ENCODE measurements at regions of chr15 and their contacts with region 1.

Region 1: GRCh38 chr15:66472176-66472999 is 25.2 kb downstream of the SNAPC5 start:
- H3K4me3 ChIP-seq: no peak overlapping the region
- H3K27ac ChIP-seq: no peak overlapping the region
- H3K4me1 ChIP-seq: no peaks in the 10 kb centered on the region
- CTCF ChIP-seq: no peak

Region 2: DNA sequence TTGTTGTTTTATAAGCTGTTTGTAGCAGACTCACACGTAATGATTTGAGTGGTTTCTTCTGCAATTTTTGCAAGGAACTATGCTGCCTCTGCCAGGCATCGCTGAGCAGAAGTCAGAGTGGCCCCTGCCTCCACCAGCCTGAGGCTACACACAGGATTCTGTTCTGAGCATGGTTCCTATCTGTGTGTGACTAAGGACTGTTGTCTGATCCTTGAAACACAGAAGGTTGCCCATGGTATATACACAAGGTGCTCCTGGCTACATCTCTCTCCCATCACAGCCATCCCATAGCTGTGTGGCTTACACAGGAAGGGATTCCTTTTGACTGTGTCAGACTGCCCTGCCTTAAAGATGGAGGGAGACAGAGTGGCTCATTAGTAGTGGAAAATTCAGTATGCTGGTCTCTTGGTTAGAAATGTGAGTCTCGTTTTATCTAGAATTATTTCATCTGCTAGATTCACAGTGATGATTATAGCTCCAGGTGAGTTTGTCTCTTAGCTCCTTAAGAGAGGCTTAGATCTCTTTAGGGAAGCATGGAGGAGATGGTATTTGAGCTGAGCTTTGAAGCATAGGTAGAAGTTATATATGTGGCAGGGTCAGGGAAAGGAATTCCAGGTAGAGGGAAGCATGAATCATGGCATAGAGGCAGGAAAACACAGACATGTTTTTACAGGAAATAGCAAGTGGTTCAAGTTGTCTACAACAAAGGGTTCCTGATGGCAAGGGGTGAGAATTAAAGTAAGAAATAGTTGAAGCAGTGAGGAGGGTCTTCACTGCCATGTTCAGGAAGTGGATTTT is 12.4 kb before region 1 on chr15:
- CTCF ChIA-PET with region 1: interaction called, 3 read pairs
- POLR2A ChIA-PET with region 1: interaction called, 12 read pairs
- H3K4me3 ChIP-seq: no peak overlapping the region
- H3K27ac ChIP-seq: no peak overlapping the region
- H3K4me1 ChIP-seq: peaks cover 6% of the 10 kb centered on the region; the same call in 1 of the 2 replicates
- CTCF ChIP-seq: no peak